Activated CD8-positive, alpha-beta T cell treated with anti-CD3 and anti-CD28 coated beads, Interleukin-2, amount 10 ng/mL, durations not matched to agents 7 days and 5 days (primary cell): ENCODE measurements at regions of chr4 and their contacts with region 1.

Region 1: DNA sequence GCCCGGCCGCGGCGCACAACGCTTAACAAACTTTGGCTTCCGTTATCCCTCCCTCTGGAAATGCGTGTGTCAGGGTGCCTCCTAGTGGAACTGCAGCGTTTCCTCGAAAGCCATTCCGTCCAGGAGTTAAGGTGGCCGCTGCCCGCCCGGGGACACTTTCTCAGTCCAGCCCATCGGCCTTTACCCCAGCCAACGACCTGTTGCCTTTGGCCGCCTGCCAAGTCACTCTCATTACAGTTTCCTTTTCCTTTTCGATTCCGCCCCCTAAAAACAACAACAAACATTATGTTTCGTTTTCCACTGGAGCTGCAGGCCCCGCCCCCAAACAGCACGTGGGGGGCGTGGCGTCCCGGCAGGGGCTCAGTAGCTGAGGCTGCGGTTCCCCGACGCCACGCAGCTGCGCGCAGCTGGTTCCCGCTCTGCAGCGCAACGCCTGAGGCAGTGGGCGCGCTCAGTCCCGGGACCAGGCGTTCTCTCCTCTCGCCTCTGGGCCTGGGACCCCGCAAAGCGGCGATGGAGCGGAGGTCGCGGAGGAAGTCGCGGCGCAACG is at the start of gene HERC5:
- DNase-seq: peak; percentile 94
- ATAC-seq: peak; percentile 93
- H3K4me3 Mint-ChIP-seq: peak within 1 kb of the TSS; percentile 100
- H3K27ac Mint-ChIP-seq: peak within 1 kb of the TSS; percentile 100
- H3K4me1 Mint-ChIP-seq: peaks cover 49% of the 10 kb centered on the region
- H3K27me3 Mint-ChIP-seq: no peaks in the 10 kb centered on the region
- total RNA-seq, gene HERC5: 30.2 TPM

Region 2: DNA sequence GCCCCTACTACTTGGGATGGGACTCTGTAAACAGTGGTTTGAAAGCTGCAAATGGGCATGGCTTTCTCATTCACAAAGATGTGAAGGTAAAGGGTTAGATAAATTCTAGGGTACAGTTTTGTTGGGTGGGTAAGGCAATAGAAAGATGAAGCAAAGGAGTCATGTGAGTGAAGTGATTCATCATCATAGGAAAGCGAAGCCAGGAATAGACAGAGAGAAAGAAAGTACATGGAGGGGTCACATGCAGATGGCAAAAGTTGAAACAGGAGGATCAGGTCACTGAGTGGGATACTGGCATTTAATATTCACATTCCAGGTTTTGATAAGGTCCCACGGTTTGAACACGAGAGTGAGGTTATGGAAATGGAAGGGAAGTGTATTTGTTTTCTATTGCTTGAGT is 290.2 kb before region 1 on chr4:
- CTCF ChIA-PET with region 1: no interaction called
- POLR2A ChIA-PET with region 1: no interaction called
- DNase-seq: no peak
- ATAC-seq: no peak
- H3K4me3 Mint-ChIP-seq: no peak overlapping the region
- H3K27ac Mint-ChIP-seq: no peak overlapping the region
- H3K4me1 Mint-ChIP-seq: no peaks in the 10 kb centered on the region
- H3K27me3 Mint-ChIP-seq: no peaks in the 10 kb centered on the region

Region 3: DNA sequence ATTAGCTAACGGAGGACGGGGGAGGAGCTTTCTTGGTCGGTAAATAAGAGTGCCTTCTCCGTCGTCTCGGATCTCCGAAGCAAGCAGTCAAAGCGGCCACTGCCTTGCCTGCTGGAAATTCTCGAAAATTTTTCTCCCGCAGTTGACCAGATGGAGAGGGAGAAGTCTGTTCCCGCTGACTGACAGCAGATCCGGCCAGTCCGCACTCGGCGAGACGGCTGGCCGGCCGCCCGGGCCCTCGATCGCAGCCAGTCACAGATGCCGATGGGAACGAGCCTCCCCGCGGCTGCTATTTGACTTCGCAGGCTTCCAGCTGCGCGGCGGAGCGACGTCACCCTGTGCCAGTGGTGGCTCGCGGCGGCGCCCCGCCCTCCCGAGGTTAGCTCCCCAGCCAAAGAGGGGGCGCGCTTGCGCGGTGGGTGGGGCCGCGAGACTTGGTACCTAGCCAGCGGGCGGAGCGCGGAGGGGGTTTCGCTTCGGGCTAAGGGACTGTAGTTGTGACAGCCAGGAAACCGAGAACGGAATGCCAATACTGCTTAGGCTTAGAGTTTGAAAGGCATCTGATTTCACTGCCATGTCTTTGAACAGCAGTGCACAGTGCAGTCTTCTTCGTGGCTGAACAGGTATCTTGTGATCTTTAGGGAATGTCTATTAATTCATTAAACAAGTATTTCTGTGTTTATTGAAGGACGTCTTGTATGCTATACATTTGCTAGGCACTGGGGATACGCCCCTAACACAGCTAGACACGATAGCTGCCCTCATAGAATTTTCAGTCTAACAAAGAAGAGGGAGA is 172.2 kb before region 1 on chr4 and contains the start of gene PPM1K:
- CTCF ChIA-PET with region 1: interaction called, 12 read pairs
- POLR2A ChIA-PET with region 1: interaction called, 79 read pairs
- DNase-seq: peak; percentile 99
- ATAC-seq: peak; percentile 91
- H3K4me3 Mint-ChIP-seq: peak within 1 kb of the TSS; percentile 99
- H3K27ac Mint-ChIP-seq: peak within 1 kb of the TSS; percentile 97
- H3K4me1 Mint-ChIP-seq: peaks cover 43% of the 10 kb centered on the region
- H3K27me3 Mint-ChIP-seq: no peaks in the 10 kb centered on the region
- total RNA-seq, gene PPM1K: 58.4 to 59.3 TPM

Region 4: DNA sequence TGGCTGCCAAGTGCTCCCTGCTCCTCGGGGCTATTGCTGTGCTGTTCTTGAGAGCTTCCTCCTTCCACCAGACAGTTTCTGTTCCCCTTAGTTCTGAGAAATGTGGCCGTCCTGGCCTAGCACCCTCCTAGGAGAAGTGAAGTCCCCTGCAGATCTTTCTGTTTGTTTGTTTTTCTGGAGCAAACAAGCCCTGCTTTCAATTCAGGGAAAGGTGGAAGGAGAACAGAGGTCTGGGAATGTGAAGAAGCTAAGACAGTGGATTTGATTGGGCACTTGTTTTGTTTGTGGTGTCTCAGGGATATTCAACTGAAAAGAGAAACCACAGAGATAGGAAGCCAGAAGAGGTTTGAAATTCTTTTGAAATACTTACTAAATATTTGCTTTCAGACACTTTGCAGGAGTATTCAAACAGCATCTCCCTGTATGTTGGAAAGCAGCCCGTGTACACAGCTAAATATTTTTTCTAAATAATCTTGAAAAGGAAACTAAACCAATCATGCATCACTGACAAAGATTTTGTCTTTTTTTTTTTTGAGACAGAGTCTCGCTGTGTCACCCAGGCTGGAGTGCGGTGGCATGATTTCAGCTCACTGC is 136.0 kb before region 1 on chr4:
- CTCF ChIA-PET with region 1: interaction called, 4 read pairs
- POLR2A ChIA-PET with region 1: interaction called, 12 read pairs
- DNase-seq: peak; percentile 60
- ATAC-seq: peak; percentile 97
- H3K4me3 Mint-ChIP-seq: peak overlapping the region; percentile 77
- H3K27ac Mint-ChIP-seq: peak overlapping the region; percentile 99
- H3K4me1 Mint-ChIP-seq: peaks cover 29% of the 10 kb centered on the region
- H3K27me3 Mint-ChIP-seq: peaks cover 1% of the 10 kb centered on the region

Region 5: GRCh38 chr4:88378691-88379559 is 77.9 kb before region 1 on chr4 and contains the start of gene HERC6:
- CTCF ChIA-PET with region 1: interaction called, 19 read pairs
- POLR2A ChIA-PET with region 1: interaction called, 26 read pairs
- DNase-seq: peak; percentile 94
- ATAC-seq: peak; percentile 62
- H3K4me3 Mint-ChIP-seq: peak within 1 kb of the TSS; percentile 87
- H3K27ac Mint-ChIP-seq: peak within 1 kb of the TSS; percentile 93
- H3K4me1 Mint-ChIP-seq: peaks cover 58% of the 10 kb centered on the region
- H3K27me3 Mint-ChIP-seq: no peaks in the 10 kb centered on the region
- total RNA-seq, gene HERC6: 25.5 to 26.9 TPM

Region 6: GRCh38 chr4:88446124-88446523 is 10.7 kb before region 1 on chr4:
- CTCF ChIA-PET with region 1: interaction called, 4 read pairs
- POLR2A ChIA-PET with region 1: interaction called, 17 read pairs
- DNase-seq: no peak
- ATAC-seq: no peak
- H3K4me3 Mint-ChIP-seq: no peak overlapping the region
- H3K27ac Mint-ChIP-seq: no peak overlapping the region
- H3K4me1 Mint-ChIP-seq: no peaks in the 10 kb centered on the region
- H3K27me3 Mint-ChIP-seq: no peaks in the 10 kb centered on the region

Region 7: GRCh38 chr4:88489100-88489761 is 32.4 kb after region 1 on chr4:
- CTCF ChIA-PET with region 1: no interaction called
- POLR2A ChIA-PET with region 1: interaction called, 10 read pairs
- DNase-seq: no peak
- ATAC-seq: peak; percentile 42
- H3K4me3 Mint-ChIP-seq: no peak overlapping the region
- H3K27ac Mint-ChIP-seq: peak overlapping the region; percentile 89
- H3K4me1 Mint-ChIP-seq: peaks cover 14% of the 10 kb centered on the region
- H3K27me3 Mint-ChIP-seq: no peaks in the 10 kb centered on the region

Region 8: DNA sequence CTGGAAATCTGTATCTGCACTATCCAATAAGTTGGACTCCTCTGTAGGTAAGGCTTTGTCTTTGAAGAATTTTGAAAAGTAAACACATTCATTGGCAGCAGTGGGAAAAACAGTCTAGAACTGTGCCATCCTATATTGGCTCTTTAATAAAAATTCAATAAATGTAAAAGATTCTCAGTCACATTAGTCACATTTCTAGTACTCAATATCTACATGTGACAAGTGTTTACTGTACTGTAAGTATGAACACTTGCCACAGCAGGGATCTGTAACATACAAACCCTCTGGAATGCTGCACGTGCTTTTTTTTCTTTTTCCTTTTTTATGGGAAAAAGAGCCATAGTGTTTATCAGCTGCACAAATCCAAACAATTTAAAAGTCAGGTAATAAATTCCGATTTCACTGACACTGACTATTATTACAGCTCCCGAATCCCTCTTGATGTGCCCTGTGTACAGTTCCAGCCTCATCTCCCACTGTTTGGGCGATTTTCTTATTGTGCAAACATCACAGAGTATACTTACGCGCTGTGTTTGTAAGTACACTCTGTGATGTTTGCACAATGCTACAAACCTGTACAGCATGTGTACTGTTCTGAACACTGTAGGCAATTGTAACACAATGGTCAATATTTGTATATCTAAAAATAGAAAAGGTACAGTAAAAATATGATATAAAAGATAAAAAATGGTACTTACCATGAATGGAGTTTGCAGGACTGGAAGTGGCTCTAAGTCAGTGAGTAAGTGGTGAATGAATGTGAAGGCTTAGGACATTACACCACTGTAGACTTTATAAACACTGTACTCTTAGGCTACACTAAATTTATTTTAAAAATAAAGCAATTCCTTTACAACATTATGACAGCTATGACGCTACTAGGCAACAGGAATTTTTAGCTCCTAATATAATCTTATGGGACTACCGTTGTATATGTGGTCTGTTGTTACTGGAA is 58.0 kb after region 1 on chr4:
- CTCF ChIA-PET with region 1: interaction called, 13 read pairs
- POLR2A ChIA-PET with region 1: no interaction called
- DNase-seq: no peak
- ATAC-seq: no peak
- H3K4me3 Mint-ChIP-seq: no peak overlapping the region
- H3K27ac Mint-ChIP-seq: no peak overlapping the region
- H3K4me1 Mint-ChIP-seq: no peaks in the 10 kb centered on the region
- H3K27me3 Mint-ChIP-seq: peaks cover 4% of the 10 kb centered on the region

Region 9: GRCh38 chr4:88591787-88592599 is 135.2 kb after region 1 on chr4 and contains the start of gene HERC3:
- CTCF ChIA-PET with region 1: no interaction called
- POLR2A ChIA-PET with region 1: no interaction called
- DNase-seq: peak; percentile 87
- ATAC-seq: peak; percentile 96
- H3K4me3 Mint-ChIP-seq: peak within 1 kb of the TSS; percentile 86
- H3K27ac Mint-ChIP-seq: peak within 1 kb of the TSS; percentile 79
- H3K4me1 Mint-ChIP-seq: peaks cover 34% of the 10 kb centered on the region
- H3K27me3 Mint-ChIP-seq: peaks cover 5% of the 10 kb centered on the region
- total RNA-seq, gene HERC3: 22.7 to 26.1 TPM

Region 10: DNA sequence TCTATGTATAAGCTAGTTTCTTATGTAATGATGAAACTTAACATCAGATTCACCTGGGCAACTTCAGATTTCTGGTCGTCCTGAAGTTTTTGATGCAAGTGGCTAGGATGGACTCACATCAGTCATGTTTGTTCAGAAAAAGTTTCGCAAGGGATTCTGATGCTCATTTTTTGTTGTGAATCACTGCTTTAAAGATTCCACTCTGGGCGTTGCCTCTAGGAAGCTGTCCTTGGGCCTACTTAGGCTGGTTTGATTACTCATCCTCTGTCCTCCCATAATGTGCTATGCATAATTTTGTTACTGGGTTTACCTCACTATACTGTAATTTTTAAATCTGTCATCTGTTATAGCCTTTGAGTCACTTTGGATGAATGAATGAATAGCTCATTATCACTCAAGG is 166.3 kb after region 1 on chr4:
- CTCF ChIA-PET with region 1: no interaction called
- POLR2A ChIA-PET with region 1: no interaction called
- DNase-seq: no peak
- ATAC-seq: no peak
- H3K4me3 Mint-ChIP-seq: no peak overlapping the region
- H3K27ac Mint-ChIP-seq: no peak overlapping the region
- H3K4me1 Mint-ChIP-seq: peaks cover 3% of the 10 kb centered on the region
- H3K27me3 Mint-ChIP-seq: no peaks in the 10 kb centered on the region

Region 11: GRCh38 chr4:88981993-88982392 is 525.2 kb after region 1 on chr4:
- CTCF ChIA-PET with region 1: no interaction called
- POLR2A ChIA-PET with region 1: no interaction called
- DNase-seq: no peak
- ATAC-seq: no peak
- H3K4me3 Mint-ChIP-seq: no peak overlapping the region
- H3K27ac Mint-ChIP-seq: no peak overlapping the region
- H3K4me1 Mint-ChIP-seq: no peaks in the 10 kb centered on the region
- H3K27me3 Mint-ChIP-seq: peaks cover 4% of the 10 kb centered on the region